ENCODE measurements at regions of chr4 and their contacts with region 1.

Region 1: DNA sequence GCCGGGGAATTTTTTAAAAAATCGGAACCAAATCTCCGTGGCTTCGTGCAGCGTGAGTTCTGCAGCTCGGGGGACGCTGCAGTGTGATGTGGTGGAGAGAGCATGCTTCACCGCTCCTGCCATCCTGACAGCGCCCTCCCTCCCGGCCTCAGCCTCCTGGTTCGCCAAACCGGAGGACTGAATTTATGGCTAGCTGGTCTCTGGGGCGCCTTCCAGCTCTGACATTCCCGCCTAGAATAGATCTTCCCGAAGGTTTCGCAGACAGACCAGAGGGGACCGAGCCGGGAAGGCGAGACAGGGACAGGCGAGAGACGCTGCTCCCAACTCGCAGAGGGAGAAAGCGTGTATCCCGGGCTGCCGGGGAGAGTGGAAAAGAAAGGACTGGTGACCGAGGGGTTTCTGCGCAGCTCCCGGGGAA is 25.9 kb downstream of the HOPX start:
- DNase-seq: peak; percentile 43
- ATAC-seq: no peak
- H3K4me3 Mint-ChIP-seq: peak overlapping the region; percentile 86
- H3K27ac Mint-ChIP-seq: peak overlapping the region; percentile 66
- H3K4me1 Mint-ChIP-seq: peaks cover 61% of the 10 kb centered on the region
- H3K27me3 Mint-ChIP-seq: peaks cover 18% of the 10 kb centered on the region

Region 2: GRCh38 chr4:56575820-56576429 is 79.3 kb before region 1 on chr4:
- CTCF ChIA-PET with region 1: interaction called, 3 read pairs
- POLR2A ChIA-PET with region 1: no interaction called
- intact Hi-C with region 1: loop called (anchors 5 kb)
- DNase-seq: no peak
- ATAC-seq: peak; percentile 33
- H3K4me3 Mint-ChIP-seq: no peak overlapping the region
- H3K27ac Mint-ChIP-seq: no peak overlapping the region
- H3K4me1 Mint-ChIP-seq: no peaks in the 10 kb centered on the region
- H3K27me3 Mint-ChIP-seq: no peaks in the 10 kb centered on the region

Region 3: DNA sequence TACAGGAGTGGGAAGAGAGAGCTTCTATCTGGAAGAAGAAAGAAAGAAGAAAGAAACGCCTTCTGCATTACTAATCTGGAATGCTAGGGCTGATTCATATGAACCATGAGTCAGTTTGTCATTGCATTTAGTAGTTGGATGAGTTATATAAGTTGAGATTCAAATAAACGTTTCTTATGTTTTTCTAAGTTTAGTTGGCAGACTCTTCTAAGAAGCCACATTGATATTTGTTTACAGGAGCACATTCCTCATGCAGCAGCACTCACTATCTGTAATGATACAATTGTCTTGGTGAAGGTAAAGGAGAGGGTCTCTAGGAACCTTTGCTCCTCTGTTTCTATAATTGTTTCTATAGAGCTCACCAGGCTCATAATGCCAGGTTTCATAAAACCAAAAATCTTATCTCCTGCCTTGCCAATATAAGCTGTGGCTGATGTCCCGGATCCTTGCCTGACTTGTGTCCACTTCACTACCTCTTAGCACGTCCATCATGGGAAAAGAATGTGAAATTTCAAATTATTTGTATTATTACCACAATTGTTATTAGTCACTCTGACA is 13.6 kb before region 1 on chr4:
- CTCF ChIA-PET with region 1: interaction called, 65 read pairs
- POLR2A ChIA-PET with region 1: interaction called, 19 read pairs
- intact Hi-C with region 1: loop called (anchors 1 kb)
- DNase-seq: no peak
- ATAC-seq: peak; percentile 80
- H3K4me3 Mint-ChIP-seq: no peak overlapping the region
- H3K27ac Mint-ChIP-seq: peak overlapping the region; percentile 82
- H3K4me1 Mint-ChIP-seq: peaks cover 36% of the 10 kb centered on the region
- H3K27me3 Mint-ChIP-seq: no peaks in the 10 kb centered on the region

Region 4: GRCh38 chr4:56757821-56758411 is 102.7 kb after region 1 on chr4:
- CTCF ChIA-PET with region 1: no interaction called
- POLR2A ChIA-PET with region 1: interaction called, 4 read pairs
- intact Hi-C with region 1: loop called in 1 of 2 experiments (anchors 5 kb)
- DNase-seq: peak; percentile 92
- ATAC-seq: peak; percentile 98
- H3K4me3 Mint-ChIP-seq: peak overlapping the region; percentile 49
- H3K27ac Mint-ChIP-seq: peak overlapping the region; percentile 91
- H3K4me1 Mint-ChIP-seq: peaks cover 59% of the 10 kb centered on the region
- H3K27me3 Mint-ChIP-seq: no peaks in the 10 kb centered on the region

Measured in activated CD4-positive, alpha-beta T cell treated with anti-CD3 and anti-CD28 coated beads for 36 hours (primary cell).